Dendritic cell treated with granulocyte-macrophage colony-stimulating factor and Interleukin-4, amounts not matched to agents 40 ng/mL and 50 ng/mL, for 4 days (primary cell): ENCODE measurements at regions of chr19 and their contacts with region 1.

Region 1: GRCh38 chr19:41439441-41440222 is at the start of gene DMAC2:
- H3K4me3 Mint-ChIP-seq: no peak within 1 kb of the TSS
- H3K27ac Mint-ChIP-seq: peak within 1 kb of the TSS; percentile 4
- H3K4me1 Mint-ChIP-seq: peaks cover 37% of the 10 kb centered on the region
- H3K27me3 Mint-ChIP-seq: no peaks in the 10 kb centered on the region

Region 2: DNA sequence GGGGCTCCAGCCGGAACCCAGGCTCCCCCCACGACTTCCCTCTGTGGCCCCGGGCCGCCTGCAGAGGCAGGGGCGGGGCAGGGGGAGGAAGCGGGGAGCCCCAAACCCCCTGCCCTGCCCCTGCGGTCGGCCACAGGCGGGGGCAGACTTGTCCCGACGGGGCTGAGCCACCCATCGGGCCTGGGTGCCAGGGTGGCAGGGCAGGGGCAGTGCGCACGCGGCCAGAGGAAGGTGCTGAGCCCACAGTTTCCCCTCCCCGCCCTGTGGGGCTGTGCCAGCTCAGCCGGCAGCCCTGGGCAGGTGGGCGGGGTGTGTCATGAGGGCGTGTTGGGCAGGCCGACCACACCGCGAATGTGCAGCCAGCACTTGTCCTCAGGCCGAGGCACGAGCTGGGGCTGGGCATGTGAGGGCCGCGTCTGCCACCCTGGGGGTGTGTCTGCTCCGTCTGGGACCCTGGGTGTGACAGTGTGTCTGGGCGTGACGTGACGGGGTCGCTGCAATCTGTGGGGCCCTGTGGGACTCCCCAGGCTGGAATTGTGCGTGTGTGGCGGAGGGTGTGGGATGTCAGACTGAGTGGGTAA is 112.0 kb before region 1 on chr19:
- intact Hi-C with region 1: loop called (anchors 10 kb)
- H3K4me3 Mint-ChIP-seq: peak overlapping the region; percentile 76
- H3K27ac Mint-ChIP-seq: peak overlapping the region; percentile 98
- H3K4me1 Mint-ChIP-seq: peaks cover 87% of the 10 kb centered on the region
- H3K27me3 Mint-ChIP-seq: no peaks in the 10 kb centered on the region

Region 3: DNA sequence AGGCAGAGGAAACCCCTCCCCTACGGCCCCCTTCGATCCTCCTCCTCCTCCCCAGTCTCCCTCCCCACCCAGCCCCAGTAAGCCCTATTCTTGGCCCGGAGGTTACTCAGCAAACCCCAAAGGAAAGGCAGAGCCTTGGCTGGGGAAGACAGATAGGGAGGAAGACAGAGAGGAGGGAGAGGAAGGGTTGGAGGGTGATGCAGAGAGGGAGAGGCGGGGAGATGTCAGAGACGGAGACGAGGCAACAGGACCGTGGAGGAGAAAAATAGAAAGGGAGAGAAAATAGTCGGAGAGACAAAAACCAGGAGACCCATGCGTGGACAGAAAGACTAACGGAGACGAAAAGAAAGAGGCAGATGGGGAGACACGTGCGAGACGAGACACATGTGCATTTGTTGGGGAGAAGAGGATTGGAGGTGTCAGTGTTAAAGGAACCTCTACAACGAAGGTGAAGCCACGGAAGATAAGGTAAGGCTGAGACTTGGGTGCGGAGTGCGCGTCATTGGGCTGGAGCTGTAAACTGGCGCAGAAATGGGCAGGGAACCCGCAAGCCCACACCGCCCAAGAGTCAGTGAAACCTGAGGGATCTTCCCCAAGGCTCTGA is 88.8 kb before region 1 on chr19:
- intact Hi-C with region 1: no loop called
- H3K4me3 Mint-ChIP-seq: peak overlapping the region; percentile 100
- H3K27ac Mint-ChIP-seq: peak overlapping the region; percentile 88
- H3K4me1 Mint-ChIP-seq: peaks cover 47% of the 10 kb centered on the region
- H3K27me3 Mint-ChIP-seq: no peaks in the 10 kb centered on the region

Region 4: GRCh38 chr19:41363753-41364523 is 75.7 kb before region 1 on chr19 and contains the start of gene B9D2:
- intact Hi-C with region 1: loop called (anchors 2 kb)
- H3K4me3 Mint-ChIP-seq: peak within 1 kb of the TSS; percentile 88
- H3K27ac Mint-ChIP-seq: peak within 1 kb of the TSS; percentile 100
- H3K4me1 Mint-ChIP-seq: peaks cover 52% of the 10 kb centered on the region
- H3K27me3 Mint-ChIP-seq: no peaks in the 10 kb centered on the region